GM10248 (cell line): ENCODE measurements at regions of chr11 and their contacts with region 1.

Region 1: DNA sequence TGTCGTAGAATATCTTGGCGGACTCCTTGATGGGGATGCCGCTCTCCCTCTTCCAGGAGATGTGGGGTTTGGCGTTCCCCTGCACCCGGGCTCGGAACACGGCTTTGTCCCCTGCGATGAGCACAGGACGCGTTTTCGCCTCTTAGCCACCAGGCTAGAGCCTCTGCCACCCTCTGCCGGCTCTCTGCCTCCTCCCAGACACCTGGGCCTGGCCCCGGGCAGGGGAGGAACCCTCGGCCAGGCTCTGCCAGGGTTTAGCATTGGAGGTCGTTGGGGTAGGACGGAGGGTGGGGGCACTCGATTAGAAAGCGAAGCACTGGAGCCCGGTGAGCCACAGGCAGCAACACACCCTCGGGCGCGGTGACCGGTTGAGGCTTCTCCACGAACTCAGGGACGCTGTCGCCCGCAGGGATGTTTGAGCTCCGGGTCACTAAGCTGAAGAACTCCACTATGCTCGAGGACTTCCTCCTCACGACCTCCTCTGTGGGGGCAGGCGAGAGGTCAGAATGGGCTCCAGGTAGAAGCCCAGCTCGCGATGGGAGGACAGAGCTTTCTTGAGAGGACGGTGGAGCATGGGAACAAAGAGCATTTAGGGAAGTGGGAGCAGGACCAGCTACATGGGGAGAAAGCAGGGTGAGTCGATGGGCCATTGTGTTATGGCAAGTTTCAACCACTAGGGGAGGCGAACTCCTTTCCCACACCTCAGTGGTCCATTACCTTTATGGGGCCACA is 4.3 kb downstream of the IGSF22 start:
- DNase-seq: peak; percentile 74
- CTCF ChIP-seq: peak; percentile 80

Region 2: GRCh38 chr11:18540207-18541009 is 181.3 kb before region 1 on chr11:
- CTCF ChIA-PET with region 1: interaction called, 19 read pairs
- POLR2A ChIA-PET with region 1: no interaction called
- DNase-seq: peak; percentile 40
- CTCF ChIP-seq: peak; percentile 36

Region 3: GRCh38 chr11:18698341-18699268 is 23.1 kb before region 1 on chr11 and contains the start of gene TMEM86A:
- CTCF ChIA-PET with region 1: interaction called, 38 read pairs
- POLR2A ChIA-PET with region 1: interaction called, 3 read pairs
- DNase-seq: peak; percentile 94
- CTCF ChIP-seq: no peak

Region 4: GRCh38 chr11:18706330-18707243 is 15.1 kb before region 1 on chr11:
- CTCF ChIA-PET with region 1: interaction called, 38 read pairs
- POLR2A ChIA-PET with region 1: interaction called, 3 read pairs
- DNase-seq: peak; percentile 61
- CTCF ChIP-seq: no peak

Region 5: DNA sequence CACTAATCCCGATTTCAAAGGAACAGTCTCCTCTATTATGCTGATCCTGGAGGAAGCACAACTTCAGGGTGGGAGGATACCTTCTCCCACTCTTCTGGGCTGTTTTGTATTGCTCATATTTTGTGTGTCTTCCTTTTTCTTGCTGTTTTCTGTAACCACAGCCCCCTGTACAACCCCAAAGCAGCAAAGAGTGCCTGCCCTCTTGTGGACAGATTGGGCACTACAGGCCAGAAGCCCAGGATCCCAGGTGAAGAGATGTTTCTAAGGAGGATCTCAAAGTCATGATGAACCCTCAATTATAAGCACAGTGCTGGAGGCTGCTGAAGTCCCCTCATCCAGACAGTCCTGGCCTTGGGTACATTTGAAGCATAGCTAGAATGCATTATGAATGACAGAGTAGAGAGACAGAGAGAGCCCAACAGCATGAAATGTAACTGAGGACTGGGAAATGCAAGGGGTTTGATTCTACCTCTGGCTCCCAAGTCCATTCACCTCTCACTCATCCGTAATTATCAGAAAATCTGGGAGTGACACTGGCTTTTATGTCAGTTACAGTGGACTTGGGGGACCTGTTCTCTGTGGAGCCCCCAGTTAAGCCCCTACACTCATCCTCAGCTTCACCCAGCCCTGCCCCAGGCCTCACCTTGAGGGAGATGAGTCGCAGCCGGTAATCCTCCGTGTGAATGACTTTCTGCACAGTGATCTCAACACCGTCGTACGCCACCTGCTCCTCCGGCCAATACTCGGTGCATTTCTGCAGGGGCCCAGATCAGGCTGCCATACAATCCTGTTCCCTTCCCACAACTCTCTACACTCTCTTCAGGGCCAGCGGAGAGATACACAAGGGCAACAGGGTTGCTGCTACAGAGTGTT is 10.5 kb after region 1 on chr11:
- CTCF ChIA-PET with region 1: interaction called, 81 read pairs
- POLR2A ChIA-PET with region 1: no interaction called
- DNase-seq: peak; percentile 75
- CTCF ChIP-seq: peak; percentile 98

Region 6: GRCh38 chr11:18741783-18742182 is 20.1 kb after region 1 on chr11:
- CTCF ChIA-PET with region 1: interaction called, 16 read pairs
- POLR2A ChIA-PET with region 1: no interaction called
- DNase-seq: no peak
- CTCF ChIP-seq: no peak

Region 7: DNA sequence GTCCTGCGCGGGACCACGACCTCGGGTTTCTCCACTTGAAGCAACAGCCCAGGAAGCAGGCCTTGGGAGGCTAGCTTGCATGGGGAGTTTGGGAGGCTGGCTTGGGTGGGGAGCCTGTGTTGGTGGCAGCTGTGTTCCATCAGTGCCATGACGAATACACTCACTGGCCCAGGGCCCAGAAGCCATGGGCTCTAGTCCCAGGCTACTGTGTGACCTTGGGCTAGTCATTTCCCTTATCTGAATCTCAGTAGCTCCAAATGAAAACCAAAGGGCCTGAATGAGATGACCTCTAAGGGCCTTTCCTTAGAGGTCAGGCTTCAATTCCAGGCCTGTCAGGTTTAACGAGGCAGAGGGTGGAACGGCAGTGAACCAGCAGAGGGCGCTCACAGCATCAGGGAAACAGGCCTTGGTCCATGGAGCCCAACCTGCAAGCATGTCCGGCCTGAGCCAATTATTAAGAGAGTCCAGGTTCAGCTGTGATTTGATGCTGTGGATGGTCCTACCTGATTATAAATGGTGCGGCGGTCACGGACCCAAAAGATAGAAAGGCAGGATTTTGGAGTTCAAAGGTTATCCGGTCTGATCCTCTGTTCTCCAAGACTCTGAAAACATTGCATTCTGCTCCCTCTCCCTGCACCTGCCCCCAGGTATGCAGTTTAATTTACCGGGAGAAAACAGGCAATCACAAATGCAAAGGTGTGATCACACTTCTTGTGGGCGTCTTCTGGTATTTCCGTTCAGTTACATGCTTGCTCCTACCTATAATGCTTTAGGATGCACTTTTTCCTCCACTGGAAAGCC is 54.0 kb after region 1 on chr11:
- CTCF ChIA-PET with region 1: interaction called, 361 read pairs
- POLR2A ChIA-PET with region 1: no interaction called
- DNase-seq: peak; percentile 79
- CTCF ChIP-seq: peak; percentile 93